ENCODE measurements at regions of chr1 and their contacts with region 1.

Region 1: GRCh38 chr1:222792744-222793143 is 22.1 kb upstream of the DISP1 start:
- DNase-seq: no peak
- H3K4me3 ChIP-seq: no peak overlapping the region
- H3K4me1 ChIP-seq: no peaks in the 10 kb centered on the region
- H3K27me3 ChIP-seq: no peaks in the 10 kb centered on the region

Region 2: DNA sequence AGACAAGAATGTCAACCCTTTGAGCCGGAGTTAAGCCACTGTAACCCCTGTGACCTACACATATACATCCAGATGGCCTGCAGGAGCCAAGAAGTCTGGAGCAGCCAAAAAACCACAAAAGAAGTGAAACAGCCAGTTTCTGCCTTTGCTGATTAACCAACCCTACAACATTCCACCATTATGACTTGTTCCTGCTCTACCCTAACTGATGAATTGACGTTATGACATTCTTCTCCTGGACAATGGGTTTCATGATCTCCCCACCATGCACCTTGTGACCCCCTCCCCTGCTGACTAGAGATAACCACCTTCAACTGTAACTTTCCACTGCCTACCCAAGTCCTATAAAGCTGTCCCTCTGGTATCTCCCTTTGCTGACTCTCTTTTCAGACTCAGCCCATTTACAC is 834.6 kb before region 1 on chr1:
- in situ Hi-C with region 1: no loop called
- DNase-seq: no peak
- H3K4me3 ChIP-seq: no peak overlapping the region
- H3K4me1 ChIP-seq: no peaks in the 10 kb centered on the region
- H3K27me3 ChIP-seq: no peaks in the 10 kb centered on the region

Region 3: GRCh38 chr1:223091896-223092295 is 299.2 kb after region 1 on chr1:
- in situ Hi-C with region 1: loop called (anchors 5 kb)
- DNase-seq: no peak
- H3K4me3 ChIP-seq: no peak overlapping the region
- H3K4me1 ChIP-seq: no peaks in the 10 kb centered on the region
- H3K27me3 ChIP-seq: no peaks in the 10 kb centered on the region

Region 4: GRCh38 chr1:223486365-223486764 is 693.6 kb after region 1 on chr1:
- in situ Hi-C with region 1: no loop called
- DNase-seq: no peak
- H3K4me3 ChIP-seq: no peak overlapping the region
- H3K4me1 ChIP-seq: no peaks in the 10 kb centered on the region
- H3K27me3 ChIP-seq: peaks cover 8% of the 10 kb centered on the region

Region 5: GRCh38 chr1:223670458-223671168 is 877.9 kb after region 1 on chr1:
- in situ Hi-C with region 1: loop called (anchors 10 kb)
- DNase-seq: peak; percentile 15 to 59
- H3K4me3 ChIP-seq: no peak overlapping the region
- H3K4me1 ChIP-seq: peaks cover 12% of the 10 kb centered on the region
- H3K27me3 ChIP-seq: no peaks in the 10 kb centered on the region